ENCODE measurements at regions of chr5 and their contacts with region 1.

Region 1: DNA sequence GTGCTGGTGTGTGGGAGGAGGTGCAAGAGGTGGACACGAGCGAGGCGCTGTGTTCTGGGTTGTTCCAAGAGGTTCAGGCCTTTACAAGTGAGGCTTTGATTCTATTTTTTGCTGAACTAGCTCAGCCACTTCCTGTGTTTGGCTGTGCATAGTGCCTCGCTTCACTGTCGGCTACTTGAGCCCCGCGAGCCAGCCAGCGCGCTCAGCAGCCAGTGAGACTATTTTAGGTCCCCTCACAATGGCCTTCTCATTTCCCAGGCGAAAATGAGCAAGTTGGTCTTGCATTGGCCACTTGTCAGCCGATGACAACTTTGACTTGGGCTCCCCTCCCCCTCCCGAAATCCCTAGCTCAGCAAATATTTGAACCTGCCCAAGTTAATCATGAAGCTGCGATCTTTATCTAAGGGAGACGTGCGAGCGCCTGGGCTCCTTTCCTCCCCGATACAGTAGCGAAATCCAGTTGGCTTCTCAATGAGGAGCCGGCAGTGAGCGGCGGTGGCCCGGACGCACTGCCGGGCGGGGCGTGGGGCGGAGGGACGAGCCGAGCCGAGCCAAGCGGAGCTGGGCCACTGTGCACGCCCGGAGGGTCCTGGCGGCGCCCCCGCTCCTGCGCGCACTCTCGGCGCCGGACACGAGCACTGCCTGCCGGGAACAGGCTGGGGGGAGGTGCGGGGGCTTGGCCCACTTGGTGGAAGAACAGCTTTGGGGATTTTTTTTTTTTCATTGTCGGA is 72.6 kb downstream of the PIK3R1 start:
- DNase-seq: peak; percentile 77
- ATAC-seq: peak; percentile 85
- H3K4me3 ChIP-seq: peak overlapping the region; percentile 77
- H3K27ac ChIP-seq: peak overlapping the region; percentile 94
- H3K4me1 ChIP-seq: peaks cover 53% of the 10 kb centered on the region
- H3K27me3 ChIP-seq: no peaks in the 10 kb centered on the region
- CTCF ChIP-seq: no peak
- EP300 ChIP-seq: peak; percentile 16 to 52; a peak in 1 of 4 replicates
- POLR2A ChIP-seq: peak; percentile 78
- RAD21 ChIP-seq: 0 out of 2 replicates have a peak, but pooled peaks have one; percentile 9

Region 2: GRCh38 chr5:67246108-67246507 is 1042.0 kb before region 1 on chr5:
- CTCF ChIA-PET with region 1: interaction called, 13 read pairs
- POLR2A ChIA-PET with region 1: no interaction called
- RAD21 ChIA-PET with region 1: interaction called, 3 read pairs
- SMC1A ChIA-PET with region 1: interaction called, 5 read pairs
- in situ Hi-C with region 1: no loop called
- intact Hi-C with region 1: no loop called
- DNase-seq: peak; percentile 19
- ATAC-seq: peak; percentile 73
- H3K4me3 ChIP-seq: no peak overlapping the region
- H3K27ac ChIP-seq: no peak overlapping the region
- H3K4me1 ChIP-seq: no peaks in the 10 kb centered on the region
- H3K27me3 ChIP-seq: no peaks in the 10 kb centered on the region
- CTCF ChIP-seq: peak; percentile 52 to 65 (median 60); a peak in 5 of 6 replicates
- EP300 ChIP-seq: no peak
- POLR2A ChIP-seq: no peak
- RAD21 ChIP-seq: peak; percentile 83

Region 3: GRCh38 chr5:68331192-68332079 is 43.3 kb after region 1 on chr5:
- CTCF ChIA-PET with region 1: interaction called, 17 read pairs
- POLR2A ChIA-PET with region 1: interaction called, 3 read pairs
- RAD21 ChIA-PET with region 1: interaction called, 27 read pairs
- SMC1A ChIA-PET with region 1: interaction called, 28 read pairs
- in situ Hi-C with region 1: no loop called
- intact Hi-C with region 1: no loop called
- DNase-seq: no peak
- ATAC-seq: peak; percentile 97
- H3K4me3 ChIP-seq: no peak overlapping the region
- H3K27ac ChIP-seq: no peak overlapping the region
- H3K4me1 ChIP-seq: peaks cover 11% of the 10 kb centered on the region
- H3K27me3 ChIP-seq: no peaks in the 10 kb centered on the region
- CTCF ChIP-seq: no peak
- EP300 ChIP-seq: peak in 1 of 2 experiments; percentile 63; a peak in 1 of 4 replicates
- POLR2A ChIP-seq: no peak
- RAD21 ChIP-seq: no peak

Region 4: GRCh38 chr5:68419637-68420452 is 131.7 kb after region 1 on chr5:
- CTCF ChIA-PET with region 1: interaction called, 4 read pairs
- POLR2A ChIA-PET with region 1: interaction called, 3 read pairs
- RAD21 ChIA-PET with region 1: interaction called, 14 read pairs
- SMC1A ChIA-PET with region 1: interaction called, 10 read pairs
- in situ Hi-C with region 1: no loop called
- intact Hi-C with region 1: no loop called
- DNase-seq: no peak
- ATAC-seq: no peak
- H3K4me3 ChIP-seq: no peak overlapping the region
- H3K27ac ChIP-seq: no peak overlapping the region
- H3K4me1 ChIP-seq: peaks cover 4% of the 10 kb centered on the region
- H3K27me3 ChIP-seq: no peaks in the 10 kb centered on the region
- CTCF ChIP-seq: no peak
- EP300 ChIP-seq: no peak
- POLR2A ChIP-seq: no peak
- RAD21 ChIP-seq: no peak

Region 5: DNA sequence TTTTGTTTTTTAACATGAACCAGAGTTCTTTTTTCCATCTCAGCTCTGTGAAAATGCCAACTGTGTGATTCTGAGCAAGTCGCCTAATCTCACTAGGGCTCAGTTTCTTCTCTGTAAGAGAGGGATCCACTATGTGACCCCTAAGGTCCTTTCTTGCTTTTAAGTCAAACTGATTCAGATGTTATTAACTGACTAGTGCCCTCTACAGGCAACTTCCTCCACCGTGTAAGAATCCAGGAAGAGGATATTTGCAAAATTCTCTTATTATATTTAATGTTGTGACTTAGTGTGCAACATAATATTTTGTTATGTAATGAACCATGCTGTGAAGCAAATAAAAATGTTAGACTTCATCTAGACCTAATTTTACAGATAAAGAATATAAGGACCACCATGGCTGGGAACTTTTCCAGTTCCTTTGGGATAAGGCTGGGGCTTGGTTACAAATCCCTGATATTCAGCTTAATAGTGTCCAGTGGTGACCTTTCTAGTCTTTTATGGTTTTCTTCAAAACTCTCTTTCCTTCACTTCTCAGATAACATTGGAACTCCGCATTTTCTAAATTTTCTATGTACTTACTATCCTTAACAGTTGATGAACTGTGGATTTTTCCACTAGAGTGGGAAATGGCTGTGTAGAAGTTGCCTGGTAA is 172.1 kb after region 1 on chr5:
- CTCF ChIA-PET with region 1: interaction called, 165 read pairs
- POLR2A ChIA-PET with region 1: interaction called, 11 read pairs
- RAD21 ChIA-PET with region 1: interaction called, 113 read pairs
- SMC1A ChIA-PET with region 1: interaction called, 182 read pairs
- in situ Hi-C with region 1: loop called (anchors 5 kb)
- intact Hi-C with region 1: loop called (anchors 1 kb)
- DNase-seq: no peak
- ATAC-seq: peak; percentile 86
- H3K4me3 ChIP-seq: no peak overlapping the region
- H3K27ac ChIP-seq: no peak overlapping the region
- H3K4me1 ChIP-seq: peaks cover 5% of the 10 kb centered on the region
- H3K27me3 ChIP-seq: no peaks in the 10 kb centered on the region
- CTCF ChIP-seq: peak; percentile 58 to 72 (median 68)
- EP300 ChIP-seq: no peak
- POLR2A ChIP-seq: no peak
- RAD21 ChIP-seq: peak; percentile 95

Region 6: GRCh38 chr5:68661237-68661636 is 373.1 kb after region 1 on chr5:
- CTCF ChIA-PET with region 1: interaction called, 29 read pairs
- POLR2A ChIA-PET with region 1: no interaction called
- RAD21 ChIA-PET with region 1: interaction called, 19 read pairs
- SMC1A ChIA-PET with region 1: interaction called, 14 read pairs
- in situ Hi-C with region 1: no loop called
- intact Hi-C with region 1: loop called (anchors 5 kb)
- DNase-seq: no peak
- ATAC-seq: peak; percentile 83
- H3K4me3 ChIP-seq: no peak overlapping the region
- H3K27ac ChIP-seq: no peak overlapping the region
- H3K4me1 ChIP-seq: no peaks in the 10 kb centered on the region
- H3K27me3 ChIP-seq: peaks cover 0 to 3% of the 10 kb centered on the region in 2 experiments; a peak in 2 of 4 replicates
- CTCF ChIP-seq: peak; percentile 43 to 55 (median 50); a peak in 5 of 6 replicates
- EP300 ChIP-seq: no peak
- POLR2A ChIP-seq: no peak
- RAD21 ChIP-seq: peak; percentile 70

Region 7: DNA sequence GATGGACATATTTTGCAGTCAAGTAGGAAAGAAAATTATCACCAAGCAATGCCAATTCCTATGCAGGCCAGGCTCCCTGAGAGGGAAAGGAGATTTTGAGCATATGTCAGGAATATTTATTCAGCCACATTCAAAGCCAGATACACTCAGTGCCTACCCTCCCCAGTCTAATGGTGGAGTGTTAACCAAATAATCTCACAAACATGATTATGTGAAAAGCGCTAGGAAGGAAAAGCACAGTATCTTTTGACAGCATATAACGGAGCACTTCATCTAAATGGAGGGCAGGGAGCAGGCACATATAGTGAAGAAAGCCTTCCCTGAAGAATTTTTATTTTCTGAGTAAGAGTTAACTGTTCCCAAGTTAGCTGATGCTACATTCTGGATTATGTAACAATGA is 725.3 kb after region 1 on chr5:
- CTCF ChIA-PET with region 1: interaction called, 27 read pairs
- POLR2A ChIA-PET with region 1: no interaction called
- RAD21 ChIA-PET with region 1: interaction called, 10 read pairs
- SMC1A ChIA-PET with region 1: interaction called, 11 read pairs
- in situ Hi-C with region 1: loop called (anchors 10 kb)
- intact Hi-C with region 1: no loop called
- DNase-seq: no peak
- ATAC-seq: no peak
- H3K4me3 ChIP-seq: no peak overlapping the region
- H3K27ac ChIP-seq: no peak overlapping the region
- H3K4me1 ChIP-seq: no peaks in the 10 kb centered on the region
- H3K27me3 ChIP-seq: peaks cover 0 to 2% of the 10 kb centered on the region in 2 experiments; a peak in 2 of 4 replicates
- CTCF ChIP-seq: no peak
- EP300 ChIP-seq: no peak
- POLR2A ChIP-seq: no peak
- RAD21 ChIP-seq: no peak

Region 8: GRCh38 chr5:69271376-69271775 is 983.2 kb after region 1 on chr5:
- CTCF ChIA-PET with region 1: no interaction called
- POLR2A ChIA-PET with region 1: no interaction called
- RAD21 ChIA-PET with region 1: no interaction called
- SMC1A ChIA-PET with region 1: no interaction called
- in situ Hi-C with region 1: no loop called
- intact Hi-C with region 1: no loop called
- DNase-seq: no peak
- ATAC-seq: no peak
- H3K4me3 ChIP-seq: no peak overlapping the region
- H3K27ac ChIP-seq: no peak overlapping the region
- H3K4me1 ChIP-seq: no peaks in the 10 kb centered on the region
- H3K27me3 ChIP-seq: no peaks in the 10 kb centered on the region
- CTCF ChIP-seq: no peak
- EP300 ChIP-seq: no peak
- POLR2A ChIP-seq: no peak
- RAD21 ChIP-seq: no peak